Thyroid gland (tissue), 4 donors: ENCODE measurements at regions of chr2 and their contacts with region 1.

Region 1: GRCh38 chr2:131673392-131674173 is 145.9 kb downstream of the CCDC74A start:
- DNase-seq: peak; percentile 78 to 83
- H3K4me3 ChIP-seq: peak overlapping the region in 1 of 3 donors; percentile 3
- H3K27ac ChIP-seq: no peak overlapping the region
- H3K4me1 ChIP-seq: peaks cover 15% of the 10 kb centered on the region in 2 donors
- H3K27me3 ChIP-seq: no peaks in the 10 kb centered on the region
- CTCF ChIP-seq: peak; percentile 58 to 90 (median 81)
- POLR2A ChIP-seq: no peak

Region 2: DNA sequence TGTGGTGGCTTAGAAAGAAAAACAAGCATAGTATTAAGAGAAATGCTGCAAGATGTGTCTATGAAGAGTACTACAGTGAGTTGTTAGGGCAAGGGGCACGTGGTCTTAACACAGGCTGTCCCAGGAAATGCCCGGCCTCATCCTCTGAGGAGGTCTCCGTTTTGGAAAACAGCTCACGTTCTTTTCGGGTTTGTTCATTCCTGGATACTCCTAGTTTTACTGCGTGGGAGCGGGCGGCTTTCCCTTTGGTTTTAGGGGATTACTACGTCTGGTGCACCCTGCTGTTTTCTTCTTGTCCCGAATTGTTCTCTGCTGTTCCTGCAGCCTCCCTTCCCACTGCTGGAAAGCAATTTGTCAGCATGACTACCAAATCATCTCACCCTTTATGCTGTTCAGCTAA is 254.1 kb before region 1 on chr2:
- intact Hi-C with region 1: loop called (anchors 5 kb)
- DNase-seq: no peak
- H3K4me3 ChIP-seq: no peak overlapping the region
- H3K27ac ChIP-seq: no peak overlapping the region
- H3K4me1 ChIP-seq: no peaks in the 10 kb centered on the region
- H3K27me3 ChIP-seq: no peaks in the 10 kb centered on the region
- CTCF ChIP-seq: no peak
- POLR2A ChIP-seq: no peak

Region 3: DNA sequence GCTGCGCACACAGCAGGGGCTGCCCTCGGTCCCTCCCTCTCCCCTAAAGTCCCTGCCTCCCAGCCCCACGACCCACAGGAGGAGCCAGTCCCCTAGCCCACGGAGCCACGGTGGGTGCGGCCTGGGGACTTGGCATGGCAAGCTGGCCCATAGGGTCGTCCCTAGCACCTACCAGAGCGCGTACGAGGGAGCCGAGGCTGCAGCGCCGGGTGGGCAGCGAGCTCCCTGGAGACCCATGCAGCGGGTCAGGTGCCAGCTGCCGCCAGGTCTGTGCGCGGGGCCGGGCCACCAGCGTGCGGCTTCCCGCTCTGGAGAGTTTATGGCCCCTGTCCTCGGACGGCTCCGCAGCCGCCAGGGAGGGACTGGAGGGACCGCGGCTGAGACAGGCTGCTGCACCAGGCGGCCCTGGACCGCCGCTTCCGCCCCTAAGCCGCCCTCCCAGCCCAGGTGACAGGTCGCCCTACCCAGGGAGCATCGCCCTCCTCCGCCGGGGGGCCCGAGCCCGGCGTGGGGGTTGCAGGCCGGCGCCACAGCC is 127.7 kb after region 1 on chr2:
- intact Hi-C with region 1: loop called (anchors 5 kb)
- DNase-seq: peak in 1 of 2 donors; percentile 5
- H3K4me3 ChIP-seq: no peak overlapping the region
- H3K27ac ChIP-seq: no peak overlapping the region
- H3K4me1 ChIP-seq: peaks cover 0 to 5% of the 10 kb centered on the region in 2 donors
- H3K27me3 ChIP-seq: no peaks in the 10 kb centered on the region
- CTCF ChIP-seq: no peak
- POLR2A ChIP-seq: no peak